ENCODE measurements at regions of chr20 and their contacts with region 1.

Region 1: GRCh38 chr20:3744806-3745685 is 12.6 kb downstream of the HSPA12B start:
- DNase-seq: peak; percentile 70 to 89
- H3K4me3 ChIP-seq: peak overlapping the region; percentile 37; the same call in 1 of the 2 replicates
- H3K27ac ChIP-seq: no peak overlapping the region
- H3K4me1 ChIP-seq: no peaks in the 10 kb centered on the region
- H3K27me3 ChIP-seq: no peaks in the 10 kb centered on the region
- CTCF ChIP-seq: no peak

Region 2: GRCh38 chr20:3262566-3262965 is 482.5 kb before region 1 on chr20:
- CTCF ChIA-PET with region 1: no interaction called
- POLR2A ChIA-PET with region 1: no interaction called
- intact Hi-C with region 1: no loop called
- DNase-seq: no peak
- H3K4me3 ChIP-seq: no peak overlapping the region
- H3K27ac ChIP-seq: no peak overlapping the region
- H3K4me1 ChIP-seq: no peaks in the 10 kb centered on the region
- H3K27me3 ChIP-seq: no peaks in the 10 kb centered on the region
- CTCF ChIP-seq: no peak

Region 3: DNA sequence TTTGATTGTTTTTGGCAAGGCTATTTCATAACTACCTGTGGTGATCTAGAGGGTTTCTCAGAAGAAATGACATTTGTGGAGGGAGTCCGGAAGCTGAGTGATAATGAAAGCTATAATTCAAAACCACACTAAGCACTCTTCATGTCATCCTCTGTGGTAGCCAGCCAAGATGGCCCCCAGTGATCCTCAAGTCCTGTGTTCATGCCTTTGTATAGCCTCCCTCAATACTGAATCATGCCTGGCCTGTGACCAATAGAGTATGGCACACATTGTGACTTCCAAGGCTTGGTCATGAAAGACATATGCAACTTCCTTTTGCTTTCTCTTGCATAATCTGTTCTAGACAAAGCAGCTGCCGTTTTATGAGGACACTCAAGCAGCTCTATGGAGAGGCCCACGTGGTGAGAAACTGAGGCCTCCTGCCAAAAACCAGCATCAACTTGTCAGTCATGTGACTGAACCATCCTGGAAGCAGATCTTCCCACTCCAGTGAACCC is 324.8 kb before region 1 on chr20:
- CTCF ChIA-PET with region 1: no interaction called
- POLR2A ChIA-PET with region 1: no interaction called
- intact Hi-C with region 1: no loop called
- DNase-seq: no peak
- H3K4me3 ChIP-seq: no peak overlapping the region
- H3K27ac ChIP-seq: no peak overlapping the region
- H3K4me1 ChIP-seq: no peaks in the 10 kb centered on the region
- H3K27me3 ChIP-seq: no peaks in the 10 kb centered on the region
- CTCF ChIP-seq: no peak

Region 4: GRCh38 chr20:3716195-3716834 is 28.7 kb before region 1 on chr20:
- CTCF ChIA-PET with region 1: interaction called, 10 read pairs
- POLR2A ChIA-PET with region 1: no interaction called
- intact Hi-C with region 1: no loop called
- DNase-seq: peak in 1 of 2 experiments; percentile 51
- H3K4me3 ChIP-seq: no peak overlapping the region
- H3K27ac ChIP-seq: no peak overlapping the region
- H3K4me1 ChIP-seq: no peaks in the 10 kb centered on the region
- H3K27me3 ChIP-seq: peaks cover 6% of the 10 kb centered on the region; the same call in 1 of the 2 replicates
- CTCF ChIP-seq: peak; percentile 76

Region 5: GRCh38 chr20:3760655-3761348 is 15.8 kb after region 1 on chr20:
- CTCF ChIA-PET with region 1: interaction called, 8 read pairs
- POLR2A ChIA-PET with region 1: interaction called, 19 read pairs
- intact Hi-C with region 1: no loop called
- DNase-seq: no peak
- H3K4me3 ChIP-seq: no peak overlapping the region
- H3K27ac ChIP-seq: no peak overlapping the region
- H3K4me1 ChIP-seq: no peaks in the 10 kb centered on the region
- H3K27me3 ChIP-seq: no peaks in the 10 kb centered on the region
- CTCF ChIP-seq: no peak

Region 6: DNA sequence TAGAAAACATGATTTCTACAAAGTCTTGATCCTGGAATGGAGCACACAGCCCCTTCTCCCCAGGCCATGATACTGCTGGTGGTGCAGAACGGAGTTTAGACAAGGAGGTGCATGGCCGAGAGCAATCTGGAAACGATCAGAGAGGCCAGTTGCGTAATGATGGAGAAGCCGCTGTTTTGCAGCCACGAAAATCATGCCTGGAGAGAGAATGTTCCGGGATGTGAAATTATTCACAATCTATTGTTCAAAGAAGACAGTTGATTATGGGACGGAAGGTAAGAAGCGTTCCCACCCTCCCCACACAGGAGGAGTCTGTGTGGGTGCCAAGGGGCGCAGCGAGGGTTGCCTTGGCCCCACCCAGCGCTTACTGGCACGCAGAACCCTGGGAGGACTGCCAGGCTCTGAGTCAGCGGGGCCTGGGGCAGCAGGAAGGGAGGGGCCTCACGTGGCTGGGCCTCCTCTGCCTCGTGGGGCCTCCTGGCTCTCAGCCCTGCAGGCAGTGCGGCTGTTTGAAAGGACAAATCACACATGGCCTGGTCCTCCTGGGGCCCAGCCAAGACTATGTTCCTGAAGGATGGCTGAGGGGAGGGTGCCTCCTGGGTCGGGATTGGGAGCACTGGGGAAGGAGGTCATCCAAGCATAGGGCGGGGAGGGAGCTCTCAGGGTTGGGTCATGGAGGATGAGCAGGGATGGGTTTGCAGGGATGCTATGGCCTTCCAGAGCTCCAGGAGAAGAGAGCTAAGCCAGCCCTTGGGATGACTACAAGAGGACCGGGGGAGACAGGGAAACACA is 66.6 kb after region 1 on chr20:
- CTCF ChIA-PET with region 1: no interaction called
- POLR2A ChIA-PET with region 1: interaction called, 42 read pairs
- intact Hi-C with region 1: no loop called
- DNase-seq: peak; percentile 92 to 100
- H3K4me3 ChIP-seq: peak overlapping the region; percentile 50
- H3K27ac ChIP-seq: peak overlapping the region; percentile 83
- H3K4me1 ChIP-seq: peaks cover 54% of the 10 kb centered on the region
- H3K27me3 ChIP-seq: no peaks in the 10 kb centered on the region
- CTCF ChIP-seq: no peak

Region 7: GRCh38 chr20:3846740-3847428 is 101.8 kb after region 1 on chr20 and contains the start of gene MAVS:
- CTCF ChIA-PET with region 1: no interaction called
- POLR2A ChIA-PET with region 1: interaction called, 13 read pairs
- intact Hi-C with region 1: no loop called
- DNase-seq: peak; percentile 66 to 91
- H3K4me3 ChIP-seq: peak within 1 kb of the TSS; percentile 100
- H3K27ac ChIP-seq: peak within 1 kb of the TSS; percentile 88
- H3K4me1 ChIP-seq: peaks cover 54% of the 10 kb centered on the region
- H3K27me3 ChIP-seq: no peaks in the 10 kb centered on the region
- CTCF ChIP-seq: no peak
- total RNA-seq, gene MAVS: 53.6 and 61.3 TPM in 2 replicates

Region 8: GRCh38 chr20:4026093-4026601 is 281.1 kb after region 1 on chr20:
- CTCF ChIA-PET with region 1: interaction called, 10 read pairs
- POLR2A ChIA-PET with region 1: no interaction called
- intact Hi-C with region 1: no loop called
- DNase-seq: no peak
- H3K4me3 ChIP-seq: no peak overlapping the region
- H3K27ac ChIP-seq: no peak overlapping the region
- H3K4me1 ChIP-seq: 0 out of 2 replicates have a peak, but pooled peaks cover 13% of the 10 kb centered on the region
- H3K27me3 ChIP-seq: no peaks in the 10 kb centered on the region
- CTCF ChIP-seq: no peak

Measured in PC-9 (cell line).